Right lobe of liver (tissue), 6 donors: ENCODE measurements at regions of chr3 and their contacts with region 1.

Region 1: DNA sequence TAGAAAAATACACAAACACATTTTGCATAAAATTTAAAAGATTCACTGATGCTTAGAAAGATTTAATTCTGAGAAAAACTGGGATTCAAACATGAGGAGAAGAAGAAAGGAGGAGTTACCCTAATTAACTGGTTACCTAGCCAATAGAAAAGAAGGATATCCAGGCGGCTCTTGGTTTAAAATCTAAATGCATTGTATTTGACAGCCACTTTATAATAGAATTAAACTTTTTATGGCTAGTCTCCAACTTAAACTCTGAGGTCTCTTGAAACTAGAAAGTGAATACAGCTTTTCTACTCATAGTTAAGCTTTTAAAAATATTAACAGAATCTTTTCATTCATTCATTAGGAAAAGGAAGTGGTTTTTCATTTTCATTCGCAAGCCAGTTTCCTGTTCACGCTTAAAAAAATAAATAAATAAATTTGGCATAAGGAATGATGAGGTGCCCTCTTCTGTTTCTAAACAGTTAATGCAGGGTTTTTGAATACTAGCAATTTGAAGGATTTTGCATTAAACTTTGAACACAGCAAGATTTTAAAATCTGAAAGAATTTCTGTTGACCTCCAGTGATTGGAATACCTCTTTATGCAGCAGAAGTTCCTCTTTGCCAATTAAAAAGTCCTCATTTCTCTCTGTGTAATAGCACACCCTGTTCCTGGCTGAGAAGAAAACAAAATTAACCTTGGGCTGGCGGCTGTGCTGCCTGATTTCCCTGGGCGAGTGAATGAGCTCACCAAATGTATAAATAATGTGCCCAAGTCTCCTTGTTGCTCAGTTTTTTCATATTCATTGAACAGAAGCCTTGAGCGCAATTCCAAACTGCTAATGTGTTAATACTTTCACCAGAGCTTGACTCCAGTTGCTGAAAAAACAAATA is 105.1 kb downstream of the ZMAT3 start:
- DNase-seq: no peak
- ATAC-seq: peak; percentile 59 to 87 (median 68)
- H3K4me3 ChIP-seq: no peak overlapping the region
- H3K27ac ChIP-seq: no peak overlapping the region
- H3K4me1 ChIP-seq: no peaks in the 10 kb centered on the region
- H3K27me3 ChIP-seq: no peaks in the 10 kb centered on the region
- CTCF ChIP-seq: peak; percentile 38 to 56 (median 50)
- POLR2A ChIP-seq: no peak

Region 2: DNA sequence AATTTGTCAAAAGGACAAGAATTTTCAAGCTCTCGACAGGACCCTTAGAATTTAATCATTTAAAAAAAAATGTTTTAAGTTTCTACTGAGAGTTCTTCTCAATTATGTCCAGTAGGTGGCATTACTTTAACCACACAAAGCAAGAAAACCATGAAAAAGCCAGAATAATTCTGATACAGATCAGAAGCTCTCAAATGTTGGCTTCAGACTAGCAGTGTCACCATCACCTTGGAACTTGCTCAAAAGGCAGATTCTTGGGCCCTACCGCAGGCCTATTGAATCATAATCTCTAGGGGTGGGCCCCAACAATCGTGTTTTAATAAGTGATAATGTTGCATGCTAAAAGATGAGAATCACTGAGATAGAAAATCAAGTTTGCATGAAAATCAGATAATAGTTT is 529.8 kb before region 1 on chr3:
- intact Hi-C with region 1: loop called (anchors 10 kb)
- DNase-seq: no peak
- ATAC-seq: peak in 3 of 4 donors; percentile 30 to 58 (median 43)
- H3K4me3 ChIP-seq: no peak overlapping the region
- H3K27ac ChIP-seq: no peak overlapping the region
- H3K4me1 ChIP-seq: no peaks in the 10 kb centered on the region
- H3K27me3 ChIP-seq: no peaks in the 10 kb centered on the region
- CTCF ChIP-seq: peak; percentile 41 to 65 (median 61)
- POLR2A ChIP-seq: no peak

Region 3: GRCh38 chr3:178443634-178444033 is 522.9 kb before region 1 on chr3:
- intact Hi-C with region 1: loop called (anchors 10 kb)
- DNase-seq: no peak
- ATAC-seq: no peak
- H3K4me3 ChIP-seq: no peak overlapping the region
- H3K27ac ChIP-seq: no peak overlapping the region
- H3K4me1 ChIP-seq: no peaks in the 10 kb centered on the region
- H3K27me3 ChIP-seq: no peaks in the 10 kb centered on the region
- CTCF ChIP-seq: no peak
- POLR2A ChIP-seq: no peak

Region 4: GRCh38 chr3:178900029-178900646 is 66.4 kb before region 1 on chr3:
- intact Hi-C with region 1: no loop called
- DNase-seq: no peak
- ATAC-seq: no peak
- H3K4me3 ChIP-seq: no peak overlapping the region
- H3K27ac ChIP-seq: no peak overlapping the region
- H3K4me1 ChIP-seq: no peaks in the 10 kb centered on the region
- H3K27me3 ChIP-seq: no peaks in the 10 kb centered on the region
- CTCF ChIP-seq: no peak
- POLR2A ChIP-seq: no peak